Activated CD8-positive, alpha-beta memory T cell treated with anti-CD3 and anti-CD28 coated beads, Interleukin-2, amount 10 ng/mL, durations not matched to agents 7 days and 5 days (primary cell): ENCODE measurements at regions of chr15 and their contacts with region 1.

Region 1: DNA sequence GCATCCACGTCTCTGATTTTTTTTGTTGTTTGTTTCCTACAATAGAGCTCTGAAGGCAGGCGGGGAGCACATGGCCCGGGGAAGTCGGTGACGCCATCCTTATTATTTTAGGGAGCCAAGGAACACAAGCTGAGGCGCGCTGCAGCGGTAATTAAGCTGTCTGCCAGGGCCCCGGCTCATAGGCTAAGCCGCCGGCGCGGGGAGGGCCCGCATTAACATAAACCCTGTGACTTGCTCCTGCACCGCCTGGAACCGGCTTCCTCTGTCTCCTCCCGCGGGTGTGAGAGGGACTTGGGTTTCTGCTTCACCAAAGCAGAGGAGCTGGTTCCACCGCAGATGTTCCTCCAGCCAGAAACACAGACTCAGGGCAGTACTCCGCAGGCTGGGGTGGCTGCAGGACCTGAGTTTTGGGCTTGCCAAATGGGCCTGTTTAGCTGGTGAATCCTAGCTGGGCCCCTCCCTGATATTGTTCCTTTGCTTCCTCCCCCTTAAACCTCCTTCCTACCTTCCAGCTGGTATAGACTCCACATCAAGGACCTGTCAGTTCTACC is 25.3 kb downstream of the ANP32A start:
- DNase-seq: peak; percentile 82
- ATAC-seq: peak; percentile 57
- H3K4me3 Mint-ChIP-seq: peak overlapping the region; percentile 44
- H3K27ac Mint-ChIP-seq: peak overlapping the region; percentile 79
- H3K4me1 Mint-ChIP-seq: peaks cover 97% of the 10 kb centered on the region
- H3K27me3 Mint-ChIP-seq: no peaks in the 10 kb centered on the region

Region 2: GRCh38 chr15:68783226-68784058 is 11.9 kb before region 1 on chr15:
- CTCF ChIA-PET with region 1: interaction called, 40 read pairs
- DNase-seq: peak; percentile 73
- ATAC-seq: peak; percentile 86
- H3K4me3 Mint-ChIP-seq: no peak overlapping the region
- H3K27ac Mint-ChIP-seq: peak overlapping the region; percentile 70
- H3K4me1 Mint-ChIP-seq: peaks cover 51% of the 10 kb centered on the region
- H3K27me3 Mint-ChIP-seq: no peaks in the 10 kb centered on the region

Region 3: GRCh38 chr15:68820295-68821189 is 25.2 kb after region 1 on chr15 and contains the start of gene ANP32A:
- CTCF ChIA-PET with region 1: interaction called, 15 read pairs
- DNase-seq: peak; percentile 95
- ATAC-seq: peak; percentile 80
- H3K4me3 Mint-ChIP-seq: peak within 1 kb of the TSS; percentile 90
- H3K27ac Mint-ChIP-seq: peak within 1 kb of the TSS; percentile 94
- H3K4me1 Mint-ChIP-seq: peaks cover 33% of the 10 kb centered on the region
- H3K27me3 Mint-ChIP-seq: no peaks in the 10 kb centered on the region
- total RNA-seq, gene ANP32A: 196 to 320 TPM

Region 4: GRCh38 chr15:68829068-68829467 is 33.7 kb after region 1 on chr15:
- CTCF ChIA-PET with region 1: interaction called, 12 read pairs
- DNase-seq: peak; percentile 54
- ATAC-seq: peak; percentile 79
- H3K4me3 Mint-ChIP-seq: no peak overlapping the region
- H3K27ac Mint-ChIP-seq: no peak overlapping the region
- H3K4me1 Mint-ChIP-seq: peaks cover 15% of the 10 kb centered on the region
- H3K27me3 Mint-ChIP-seq: peaks cover 16% of the 10 kb centered on the region